ENCODE measurements at regions of chr2 and their contacts with region 1.

Region 1: DNA sequence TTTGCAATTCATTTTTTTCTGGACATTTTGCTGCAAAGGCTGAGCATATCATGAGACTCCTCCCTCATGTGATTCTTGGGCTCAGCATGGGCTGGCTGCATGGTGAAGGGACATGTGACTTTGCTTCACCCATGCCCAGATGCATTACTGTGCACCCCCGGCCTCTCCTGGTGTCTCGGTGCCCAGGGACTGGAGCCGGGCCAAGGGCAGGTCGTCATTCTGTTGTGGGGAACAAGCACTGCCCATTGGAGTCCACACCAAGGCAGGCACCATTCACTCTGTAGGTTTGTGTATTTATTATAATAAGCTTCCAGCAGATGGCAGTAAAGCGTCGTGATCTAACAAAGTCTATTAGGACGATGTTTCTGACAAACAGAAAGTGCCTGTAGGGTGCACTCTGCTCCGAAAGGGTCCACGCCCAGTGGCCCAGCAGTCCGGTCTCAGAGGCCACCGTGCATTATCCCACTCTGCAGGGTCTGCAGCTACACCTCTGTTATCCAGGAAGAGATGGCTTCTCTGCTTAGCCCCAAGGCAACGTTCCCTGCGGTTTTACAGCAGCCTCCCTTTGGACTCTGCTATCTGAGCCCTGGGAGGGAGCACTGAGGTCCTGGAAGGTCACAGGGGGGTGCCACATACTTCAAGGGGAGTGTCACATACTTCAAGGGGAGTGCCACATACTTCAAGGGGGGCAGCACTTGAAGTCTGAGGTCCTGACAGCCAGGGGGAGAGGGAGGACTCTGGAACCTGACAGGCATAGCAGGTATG is 219.6 kb downstream of the TSN start:
- DNase-seq: peak; percentile 43 to 62 (median 56)
- H3K4me3 ChIP-seq: peak overlapping the region; percentile 39 to 46
- H3K4me3 Mint-ChIP-seq: peak overlapping the region; percentile 79 to 87 (median 82)
- H3K27ac ChIP-seq: no peak overlapping the region
- H3K27ac Mint-ChIP-seq: peak overlapping the region in 5 of 7 donors; percentile 36 to 76 (median 62)
- H3K4me1 ChIP-seq: peaks cover 4% of the 10 kb centered on the region
- H3K4me1 Mint-ChIP-seq: peaks cover 6 to 15% (median 10%) of the 10 kb centered on the region in 4 donors
- H3K27me3 ChIP-seq: no peaks in the 10 kb centered on the region
- H3K27me3 Mint-ChIP-seq: peaks cover 0 to 2% of the 10 kb centered on the region in 2 donors

Region 2: GRCh38 chr2:121796239-121796638 is 178.8 kb before region 1 on chr2:
- CTCF ChIA-PET with region 1: no interaction called
- POLR2A ChIA-PET with region 1: no interaction called
- intact Hi-C with region 1: no loop called
- DNase-seq: no peak
- H3K4me3 ChIP-seq: no peak overlapping the region
- H3K4me3 Mint-ChIP-seq: no peak overlapping the region
- H3K27ac ChIP-seq: no peak overlapping the region
- H3K27ac Mint-ChIP-seq: no peak overlapping the region
- H3K4me1 ChIP-seq: no peaks in the 10 kb centered on the region
- H3K4me1 Mint-ChIP-seq: no peaks in the 10 kb centered on the region
- H3K27me3 ChIP-seq: no peaks in the 10 kb centered on the region
- H3K27me3 Mint-ChIP-seq: peaks cover 10 to 20% of the 10 kb centered on the region in 2 donors

Region 3: GRCh38 chr2:122003196-122003940 is 28.3 kb after region 1 on chr2:
- CTCF ChIA-PET with region 1: no interaction called
- POLR2A ChIA-PET with region 1: no interaction called
- intact Hi-C with region 1: no loop called
- DNase-seq: no peak
- H3K4me3 ChIP-seq: no peak overlapping the region
- H3K4me3 Mint-ChIP-seq: no peak overlapping the region
- H3K27ac ChIP-seq: no peak overlapping the region
- H3K27ac Mint-ChIP-seq: no peak overlapping the region
- H3K4me1 ChIP-seq: no peaks in the 10 kb centered on the region
- H3K4me1 Mint-ChIP-seq: no peaks in the 10 kb centered on the region
- H3K27me3 ChIP-seq: no peaks in the 10 kb centered on the region
- H3K27me3 Mint-ChIP-seq: peaks cover 8% of the 10 kb centered on the region in 2 donors

Region 4: DNA sequence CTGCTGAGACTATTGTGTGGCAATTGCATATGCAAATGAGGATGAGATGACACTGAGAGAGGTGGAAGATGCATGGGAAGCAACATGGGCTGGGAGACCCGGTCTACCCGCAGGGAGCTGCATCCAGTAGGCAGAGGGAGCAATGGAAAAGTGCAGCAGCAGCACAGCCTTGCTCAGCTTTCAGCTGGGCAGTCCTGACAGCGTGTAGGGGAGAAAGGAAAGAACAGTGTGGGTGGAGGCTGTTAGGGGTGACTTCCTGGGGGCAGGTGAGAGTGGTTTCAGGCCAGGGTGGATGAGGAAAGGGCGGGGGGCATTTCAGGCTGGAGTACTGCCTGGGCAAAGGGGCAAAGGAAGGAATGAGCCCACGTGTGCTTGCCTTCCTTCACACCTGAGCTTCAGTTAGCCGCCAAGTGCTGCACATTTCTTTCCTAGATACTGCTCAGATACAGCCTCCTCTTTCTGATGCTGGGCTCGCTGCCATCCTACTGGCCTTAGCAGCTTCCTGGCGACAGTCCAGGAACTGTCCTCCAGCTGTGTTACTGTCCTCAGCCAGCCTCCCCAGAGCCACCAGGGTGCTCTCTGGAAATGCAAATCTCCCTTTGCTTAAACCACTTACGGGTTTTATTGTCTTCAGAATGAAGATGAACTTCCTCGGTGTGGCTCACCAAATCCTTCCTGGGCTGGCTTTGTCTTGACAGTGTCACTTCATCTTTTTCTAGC is 56.6 kb after region 1 on chr2:
- CTCF ChIA-PET with region 1: no interaction called
- POLR2A ChIA-PET with region 1: no interaction called
- intact Hi-C with region 1: no loop called
- DNase-seq: no peak
- H3K4me3 ChIP-seq: no peak overlapping the region
- H3K4me3 Mint-ChIP-seq: no peak overlapping the region
- H3K27ac ChIP-seq: no peak overlapping the region
- H3K27ac Mint-ChIP-seq: no peak overlapping the region
- H3K4me1 ChIP-seq: no peaks in the 10 kb centered on the region
- H3K4me1 Mint-ChIP-seq: no peaks in the 10 kb centered on the region
- H3K27me3 ChIP-seq: no peaks in the 10 kb centered on the region
- H3K27me3 Mint-ChIP-seq: peaks cover 0 to 2% of the 10 kb centered on the region in 2 donors

Region 5: DNA sequence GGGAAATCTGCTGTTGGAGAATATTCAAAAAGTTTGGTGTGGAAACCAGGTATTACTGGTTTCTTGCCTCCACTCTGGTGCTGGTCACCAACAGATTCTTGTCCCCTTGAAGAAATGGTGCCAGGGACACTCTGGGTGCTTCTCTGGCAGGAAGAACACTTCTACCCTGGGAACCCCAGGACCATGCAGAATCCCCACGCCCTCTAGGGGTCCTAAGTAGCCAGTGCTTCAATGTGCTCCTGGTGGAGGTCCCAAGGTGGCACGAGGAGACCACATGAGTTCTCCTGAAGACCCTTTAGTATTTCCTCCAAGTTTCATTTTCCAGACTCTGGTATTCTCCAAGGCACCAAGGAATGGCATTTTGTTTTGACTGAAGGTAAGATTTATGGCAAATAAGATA is 161.0 kb after region 1 on chr2:
- CTCF ChIA-PET with region 1: no interaction called
- POLR2A ChIA-PET with region 1: no interaction called
- intact Hi-C with region 1: loop called (anchors 5 kb)
- DNase-seq: no peak
- H3K4me3 ChIP-seq: no peak overlapping the region
- H3K4me3 Mint-ChIP-seq: no peak overlapping the region
- H3K27ac ChIP-seq: no peak overlapping the region
- H3K27ac Mint-ChIP-seq: no peak overlapping the region
- H3K4me1 ChIP-seq: no peaks in the 10 kb centered on the region
- H3K4me1 Mint-ChIP-seq: peaks cover 0 to 6% (median 0%) of the 10 kb centered on the region in 4 donors
- H3K27me3 ChIP-seq: no peaks in the 10 kb centered on the region
- H3K27me3 Mint-ChIP-seq: peaks cover 0 to 5% of the 10 kb centered on the region in 2 donors

Region 6: GRCh38 chr2:122451040-122451439 is 476.0 kb after region 1 on chr2:
- CTCF ChIA-PET with region 1: no interaction called
- POLR2A ChIA-PET with region 1: no interaction called
- intact Hi-C with region 1: loop called (anchors 5 kb)
- DNase-seq: no peak
- H3K4me3 ChIP-seq: no peak overlapping the region
- H3K4me3 Mint-ChIP-seq: no peak overlapping the region
- H3K27ac ChIP-seq: no peak overlapping the region
- H3K27ac Mint-ChIP-seq: no peak overlapping the region
- H3K4me1 ChIP-seq: no peaks in the 10 kb centered on the region
- H3K4me1 Mint-ChIP-seq: no peaks in the 10 kb centered on the region
- H3K27me3 ChIP-seq: no peaks in the 10 kb centered on the region
- H3K27me3 Mint-ChIP-seq: peaks cover 1 to 2% of the 10 kb centered on the region in 2 donors

Measured in CD4-positive, alpha-beta memory T cell (primary cell).